Psoas muscle (tissue), 8 donors: ENCODE measurements at regions of chr17 and their contacts with region 1.

Region 1: DNA sequence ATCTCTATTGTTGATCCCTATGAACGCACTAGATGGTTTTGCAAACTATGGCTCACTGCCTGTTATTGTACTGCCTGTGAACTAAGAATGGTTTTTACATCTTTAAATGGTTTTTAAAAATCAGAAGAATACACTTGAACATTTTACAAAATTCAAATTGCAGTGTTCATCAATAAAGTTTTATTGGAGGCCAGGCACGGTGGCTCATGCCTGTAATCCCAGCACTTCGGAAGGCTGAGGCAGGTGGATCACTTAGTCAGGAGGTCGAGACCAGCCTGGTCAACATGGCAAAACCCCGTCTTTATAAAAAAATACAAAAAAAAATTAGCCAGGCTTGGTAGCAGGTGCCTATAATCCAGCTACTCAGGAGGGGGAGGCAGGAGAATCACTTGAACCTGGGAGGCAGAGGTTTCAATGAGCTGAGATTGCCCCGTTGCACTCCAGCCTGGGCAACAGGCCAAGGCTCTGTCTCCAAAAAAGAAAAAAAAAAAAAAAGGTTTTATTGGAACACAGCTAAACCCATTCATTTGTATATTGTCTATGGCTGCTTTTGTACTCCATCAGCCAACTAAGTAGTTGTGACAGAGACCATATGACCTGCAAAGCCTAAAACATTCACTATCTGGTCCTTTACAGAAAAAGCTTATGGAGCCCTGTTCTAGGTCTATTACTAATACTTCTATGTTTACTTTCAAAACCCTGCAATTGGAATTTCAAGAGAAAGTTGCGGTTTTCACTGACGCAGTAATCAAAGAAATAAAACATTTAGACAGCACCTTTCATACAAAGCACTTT is 18.9 kb downstream of the IKZF3 start:
- DNase-seq: no peak
- ATAC-seq: no peak
- H3K4me3 ChIP-seq: no peak overlapping the region
- H3K27ac ChIP-seq: no peak overlapping the region
- H3K4me1 ChIP-seq: no peaks in the 10 kb centered on the region
- H3K27me3 ChIP-seq: peaks cover 0 to 38% (median 10%) of the 10 kb centered on the region in 3 donors
- CTCF ChIP-seq: no peak

Region 2: GRCh38 chr17:39913989-39914388 is 68.7 kb after region 1 on chr17:
- intact Hi-C with region 1: loop called in 1 of 2 experiments (anchors 2 kb)
- DNase-seq: no peak
- ATAC-seq: no peak
- H3K4me3 ChIP-seq: no peak overlapping the region
- H3K27ac ChIP-seq: no peak overlapping the region
- H3K4me1 ChIP-seq: no peaks in the 10 kb centered on the region
- H3K27me3 ChIP-seq: no peaks in the 10 kb centered on the region
- CTCF ChIP-seq: no peak

Region 3: DNA sequence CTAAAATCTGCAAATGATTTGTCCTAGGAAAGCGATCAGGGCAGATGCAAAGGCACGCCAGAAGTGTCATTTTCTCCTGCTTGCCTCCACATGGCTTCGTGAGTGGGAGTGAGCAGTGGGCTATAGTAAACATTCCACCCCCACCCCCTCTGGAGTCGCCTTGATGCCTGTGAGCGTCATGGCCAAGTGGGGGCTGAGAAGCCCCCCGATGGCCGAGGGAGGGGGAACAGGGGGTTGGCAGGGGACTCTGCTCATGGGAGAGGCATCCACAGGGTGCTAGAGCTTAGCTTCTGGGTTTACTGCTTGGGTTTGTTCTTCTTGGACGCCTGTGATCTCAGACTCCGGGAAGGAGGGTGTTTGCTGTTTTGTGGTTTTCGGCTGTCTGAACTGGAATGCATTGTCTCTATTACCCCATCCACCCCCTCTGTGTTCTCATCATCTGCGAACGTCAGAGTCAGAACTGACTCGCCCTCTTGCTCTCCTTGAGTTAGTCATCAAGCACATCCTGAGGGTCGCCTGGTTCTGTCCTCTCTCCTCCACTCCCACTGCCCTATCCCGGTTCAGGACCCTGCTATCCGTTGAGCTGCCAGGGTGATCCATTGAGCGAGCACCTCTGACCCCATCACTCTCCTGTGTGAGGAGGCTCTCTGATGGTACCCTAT is 640.7 kb after region 1 on chr17:
- intact Hi-C with region 1: no loop called
- DNase-seq: peak; percentile 42 to 52
- ATAC-seq: peak; percentile 32 to 73 (median 70)
- H3K4me3 ChIP-seq: no peak overlapping the region
- H3K27ac ChIP-seq: peak overlapping the region; percentile 53
- H3K4me1 ChIP-seq: no peaks in the 10 kb centered on the region
- H3K27me3 ChIP-seq: no peaks in the 10 kb centered on the region
- CTCF ChIP-seq: no peak